Posterior cingulate gyrus (tissue), 11 donors: ENCODE measurements at regions of chr1 and their contacts with region 1.

Region 1: DNA sequence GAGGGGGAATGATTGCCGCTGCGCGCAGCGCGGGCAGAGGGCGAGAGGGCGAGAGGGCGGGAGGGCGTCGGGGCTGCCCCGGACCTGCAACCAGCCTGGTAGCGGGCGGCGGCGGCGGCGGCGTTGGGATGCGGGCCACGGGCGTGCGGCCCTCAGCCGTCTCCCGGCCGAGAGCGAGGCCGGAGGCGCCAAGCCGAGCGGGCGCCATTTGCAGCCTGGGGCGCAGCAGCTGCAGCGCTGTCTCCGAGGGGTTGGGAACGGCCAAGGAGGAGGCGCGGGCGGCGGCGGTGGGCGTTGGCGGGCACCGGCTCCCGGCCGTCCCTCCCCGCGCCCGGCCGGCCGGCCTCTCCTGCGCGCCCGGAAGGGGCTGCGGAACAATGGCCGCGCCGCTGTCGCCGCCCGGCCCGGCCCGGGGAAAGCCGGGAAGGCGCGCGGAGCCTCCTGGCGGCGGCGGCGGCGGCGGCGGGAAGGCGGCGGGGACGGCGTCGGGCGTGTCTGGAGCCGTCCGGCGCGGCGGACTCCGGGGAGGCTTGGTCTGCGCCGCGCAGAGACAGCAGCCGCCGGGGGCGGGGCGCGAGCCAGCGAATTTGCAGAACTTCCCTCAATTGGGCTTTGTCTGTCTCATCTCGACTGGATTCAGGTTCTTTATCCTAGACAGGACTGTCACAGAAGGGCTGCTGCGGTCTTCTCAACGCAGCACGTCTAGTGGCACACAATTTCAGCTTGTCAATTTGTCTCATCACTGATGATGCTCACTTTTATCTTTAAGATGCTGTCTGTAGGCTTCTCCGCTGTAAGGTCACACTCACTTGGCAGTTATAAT is 35.7 kb downstream of the ZBTB8B start:
- DNase-seq: peak; percentile 25 to 92 (median 62)

Region 2: DNA sequence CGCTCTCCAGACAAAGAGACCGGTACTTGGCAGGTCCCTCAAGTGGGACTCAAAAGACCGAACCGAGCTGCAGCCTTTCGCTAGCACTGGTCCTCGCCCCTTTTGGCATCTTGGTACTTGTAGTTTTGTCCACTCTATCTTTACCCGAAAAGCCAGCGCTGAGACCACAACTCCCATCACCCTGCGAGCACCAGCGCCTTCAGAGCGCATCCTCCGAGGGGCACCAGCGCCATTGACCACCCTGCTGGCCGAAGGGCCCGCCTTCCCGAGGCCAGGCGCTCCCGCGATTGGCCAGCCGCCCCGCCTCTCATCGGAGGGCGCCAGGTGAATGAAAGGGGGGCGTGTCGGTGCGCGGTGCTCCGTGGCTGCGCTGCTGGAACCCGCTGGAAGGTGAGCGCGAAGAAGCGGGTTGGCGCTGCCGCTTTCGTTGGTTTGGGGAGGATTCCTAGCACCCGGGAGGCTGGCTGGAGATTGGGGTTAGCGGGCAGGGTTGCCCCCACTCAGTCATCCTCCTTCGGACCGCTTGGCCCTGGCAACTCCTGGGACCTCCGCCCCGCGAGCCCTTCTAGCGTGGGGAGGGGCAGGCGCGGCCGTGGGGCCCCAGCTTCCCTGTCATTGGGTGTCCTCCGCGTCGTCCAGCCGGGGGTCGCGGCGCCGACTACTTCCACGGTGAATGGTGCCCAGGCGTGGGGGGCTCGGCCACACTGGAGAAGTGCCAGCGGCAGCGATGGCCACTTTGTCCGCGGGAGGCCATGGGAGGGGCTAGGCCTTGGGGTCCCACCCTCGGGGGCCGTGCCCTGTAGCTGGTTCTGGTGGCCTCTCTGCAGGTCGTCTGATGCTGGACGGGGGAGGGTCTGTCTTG is 35.7 kb before region 1 on chr1 and contains the start of gene ZBTB8B:
- intact Hi-C with region 1: loop called (anchors 5 kb)
- DNase-seq: peak; percentile 76 to 99 (median 92)

Region 3: GRCh38 chr1:32538887-32539583 is 38.4 kb after region 1 on chr1 and contains the start of gene ZBTB8A:
- intact Hi-C with region 1: loop called (anchors 1 kb)
- DNase-seq: peak in 6 of 10 donors; percentile 14 to 75 (median 29)